GM12878 (cell line): ENCODE measurements at regions of chr11 and their contacts with region 1.

Region 1: DNA sequence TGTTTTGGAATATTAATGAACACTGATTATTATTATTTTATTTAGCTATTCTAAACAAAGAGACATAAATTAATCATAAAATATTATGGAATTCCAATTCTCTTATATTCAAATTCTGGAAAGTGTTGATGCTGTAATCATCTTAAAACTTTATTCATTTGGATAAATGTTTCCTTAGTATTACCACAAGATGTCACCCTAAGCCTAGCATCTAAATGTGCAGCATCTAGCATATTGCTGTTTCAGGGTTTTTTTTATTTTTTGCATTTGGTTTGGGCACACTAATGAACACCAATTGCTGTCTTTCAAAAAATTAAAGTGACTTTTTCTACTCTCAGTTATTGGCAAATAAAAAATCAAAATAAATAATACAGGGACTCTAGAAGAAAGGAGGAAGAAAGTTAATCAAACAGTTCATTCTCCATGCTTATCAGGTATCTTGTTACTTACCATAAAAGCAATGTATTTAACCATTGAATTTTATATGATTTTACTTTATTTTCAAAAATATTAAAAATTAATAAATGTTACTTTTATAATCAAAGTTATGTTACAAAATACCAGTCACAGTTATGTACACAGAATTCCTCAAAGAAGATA is 31.8 kb downstream of the DLG2 start:
- DNase-seq: peak; percentile 3
- ATAC-seq: peak; percentile 76
- H3K4me3 ChIP-seq: no peak overlapping the region
- H3K27ac ChIP-seq: no peak overlapping the region
- H3K4me1 ChIP-seq: no peaks in the 10 kb centered on the region
- H3K27me3 ChIP-seq: no peaks in the 10 kb centered on the region
- CTCF ChIP-seq: peak; percentile 32 to 70 (median 45); a peak in 5 of 6 replicates
- EP300 ChIP-seq: no peak
- POLR2A ChIP-seq: no peak
- RAD21 ChIP-seq: peak; percentile 92

Region 2: DNA sequence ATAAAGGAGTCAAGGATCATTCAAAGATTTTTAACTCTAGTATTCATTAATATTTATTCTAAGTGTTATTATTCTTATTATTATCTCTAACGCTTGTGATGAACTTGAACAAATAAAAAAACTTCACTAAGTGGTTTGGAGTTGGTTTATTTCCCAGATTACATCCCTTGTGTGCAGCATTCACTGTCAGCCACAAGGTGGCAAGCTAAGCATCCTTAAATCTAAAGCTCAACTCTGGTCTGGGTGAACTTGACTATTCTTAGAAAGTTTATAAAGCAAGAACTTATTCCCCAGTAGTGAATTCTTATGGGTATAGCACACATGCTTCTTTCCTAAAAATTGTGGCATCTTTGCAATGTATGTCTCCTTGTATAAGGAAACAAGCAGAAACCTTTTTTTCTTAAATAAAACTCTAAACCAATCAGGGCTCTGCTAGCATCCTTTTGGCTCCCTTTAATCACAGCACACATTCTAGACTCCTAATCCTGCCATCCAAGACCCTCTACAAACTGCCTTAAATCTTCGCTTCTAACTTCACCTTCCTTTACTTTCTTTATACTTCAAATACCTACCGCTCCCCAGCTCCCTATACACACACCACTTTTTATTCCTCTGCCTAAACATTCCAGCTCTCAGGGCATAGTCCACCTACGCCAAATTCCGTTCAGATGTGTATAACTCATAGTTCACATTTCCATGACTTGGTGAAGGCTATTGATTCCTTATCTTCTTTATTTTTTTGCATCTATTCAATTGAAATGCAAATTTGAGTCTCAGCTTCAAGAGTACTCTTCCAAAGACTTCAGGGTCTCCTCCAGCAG is 1037.1 kb before region 1 on chr11:
- CTCF ChIA-PET with region 1: interaction called, 17 read pairs
- POLR2A ChIA-PET with region 1: no interaction called
- RAD21 ChIA-PET with region 1: interaction called, 4 read pairs
- SMC1A ChIA-PET with region 1: interaction called, 14 read pairs
- in situ Hi-C with region 1: no loop called
- intact Hi-C with region 1: loop called (anchors 2 kb)
- DNase-seq: no peak
- ATAC-seq: peak; percentile 89
- H3K4me3 ChIP-seq: no peak overlapping the region
- H3K27ac ChIP-seq: no peak overlapping the region
- H3K4me1 ChIP-seq: no peaks in the 10 kb centered on the region
- H3K27me3 ChIP-seq: no peaks in the 10 kb centered on the region
- CTCF ChIP-seq: peak; percentile 73 to 82 (median 77)
- EP300 ChIP-seq: no peak
- POLR2A ChIP-seq: no peak
- RAD21 ChIP-seq: peak; percentile 85

Region 3: DNA sequence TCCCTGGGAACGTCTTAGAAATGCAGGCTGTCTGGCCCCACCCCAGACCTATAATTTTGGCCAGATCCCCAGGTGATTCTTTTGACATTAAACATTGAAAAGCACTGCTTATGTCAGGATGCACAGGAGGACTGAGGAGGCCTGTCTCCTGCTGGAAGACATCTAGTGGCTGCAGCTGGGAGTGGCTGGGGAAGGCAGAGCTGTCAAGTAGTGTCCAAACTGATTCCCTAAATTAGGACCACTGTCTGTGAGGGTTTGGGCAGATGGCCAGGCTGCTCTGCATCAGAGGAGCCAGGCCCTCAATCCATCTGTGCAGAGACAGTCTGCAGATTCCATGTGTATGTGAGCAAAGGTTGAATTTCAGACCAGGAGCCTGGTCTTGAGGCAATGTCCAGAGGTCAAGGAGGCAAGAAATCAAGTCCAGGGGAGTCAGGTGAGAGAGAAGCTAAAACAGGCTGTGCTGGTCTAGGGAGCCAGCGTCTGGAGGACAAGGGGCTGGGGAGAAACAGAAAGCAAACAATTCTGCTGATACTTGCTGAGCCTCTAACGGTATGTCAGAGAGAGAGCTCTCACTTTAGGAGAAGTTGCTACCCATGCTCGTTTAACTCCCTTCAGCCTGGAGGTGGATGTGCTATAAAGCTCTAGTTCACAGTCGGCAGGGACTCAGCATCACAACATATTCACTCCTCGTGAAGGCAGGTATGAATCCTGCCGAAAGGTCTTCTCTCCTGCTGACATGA is 230.9 kb after region 1 on chr11:
- CTCF ChIA-PET with region 1: no interaction called
- POLR2A ChIA-PET with region 1: no interaction called
- RAD21 ChIA-PET with region 1: no interaction called
- SMC1A ChIA-PET with region 1: no interaction called
- in situ Hi-C with region 1: loop called (anchors 10 kb)
- intact Hi-C with region 1: loop called (anchors 5 kb)
- DNase-seq: no peak
- ATAC-seq: peak; percentile 85
- H3K4me3 ChIP-seq: no peak overlapping the region
- H3K27ac ChIP-seq: no peak overlapping the region
- H3K4me1 ChIP-seq: no peaks in the 10 kb centered on the region
- H3K27me3 ChIP-seq: no peaks in the 10 kb centered on the region; a peak in 1 of 4 replicates
- CTCF ChIP-seq: peak; percentile 33 to 60 (median 33); a peak in 5 of 6 replicates
- EP300 ChIP-seq: no peak
- POLR2A ChIP-seq: no peak
- RAD21 ChIP-seq: peak; percentile 27; the same call in 1 of the 2 replicates

Region 4: DNA sequence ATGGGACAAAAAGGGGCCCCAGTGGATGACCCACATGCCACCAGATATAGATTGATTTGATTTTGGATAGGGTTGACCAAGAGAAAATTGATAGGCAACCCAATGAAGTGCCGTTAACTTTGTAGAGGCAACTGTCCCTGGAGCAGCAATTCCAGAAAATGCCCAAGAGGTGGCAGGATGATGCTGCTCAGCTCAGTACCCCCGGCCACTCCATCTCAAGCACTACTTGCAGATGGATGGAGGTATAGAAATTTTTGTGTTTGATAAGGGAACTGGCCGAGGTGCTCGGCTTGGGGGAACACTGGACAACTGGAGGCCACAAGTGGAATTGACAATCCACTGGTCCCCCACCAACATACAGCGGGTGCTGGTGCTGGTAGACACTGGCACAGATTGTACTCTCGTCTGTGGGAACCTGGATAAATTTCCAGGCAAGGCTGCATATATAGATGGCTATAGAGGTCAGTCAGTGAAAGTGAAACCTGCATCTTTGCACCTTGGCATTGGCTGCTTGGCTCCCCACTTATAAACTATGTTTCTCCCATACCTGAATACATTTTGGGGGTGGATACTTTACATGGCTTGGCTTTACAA is 346.1 kb after region 1 on chr11:
- CTCF ChIA-PET with region 1: no interaction called
- POLR2A ChIA-PET with region 1: no interaction called
- RAD21 ChIA-PET with region 1: no interaction called
- SMC1A ChIA-PET with region 1: no interaction called
- in situ Hi-C with region 1: no loop called
- intact Hi-C with region 1: loop called (anchors 10 kb)
- DNase-seq: no peak
- ATAC-seq: peak; percentile 77
- H3K4me3 ChIP-seq: no peak overlapping the region
- H3K27ac ChIP-seq: no peak overlapping the region
- H3K4me1 ChIP-seq: no peaks in the 10 kb centered on the region
- H3K27me3 ChIP-seq: no peaks in the 10 kb centered on the region
- CTCF ChIP-seq: peak; percentile 51 to 54 (median 52)
- EP300 ChIP-seq: no peak
- POLR2A ChIP-seq: no peak
- RAD21 ChIP-seq: peak; percentile 72

Region 5: DNA sequence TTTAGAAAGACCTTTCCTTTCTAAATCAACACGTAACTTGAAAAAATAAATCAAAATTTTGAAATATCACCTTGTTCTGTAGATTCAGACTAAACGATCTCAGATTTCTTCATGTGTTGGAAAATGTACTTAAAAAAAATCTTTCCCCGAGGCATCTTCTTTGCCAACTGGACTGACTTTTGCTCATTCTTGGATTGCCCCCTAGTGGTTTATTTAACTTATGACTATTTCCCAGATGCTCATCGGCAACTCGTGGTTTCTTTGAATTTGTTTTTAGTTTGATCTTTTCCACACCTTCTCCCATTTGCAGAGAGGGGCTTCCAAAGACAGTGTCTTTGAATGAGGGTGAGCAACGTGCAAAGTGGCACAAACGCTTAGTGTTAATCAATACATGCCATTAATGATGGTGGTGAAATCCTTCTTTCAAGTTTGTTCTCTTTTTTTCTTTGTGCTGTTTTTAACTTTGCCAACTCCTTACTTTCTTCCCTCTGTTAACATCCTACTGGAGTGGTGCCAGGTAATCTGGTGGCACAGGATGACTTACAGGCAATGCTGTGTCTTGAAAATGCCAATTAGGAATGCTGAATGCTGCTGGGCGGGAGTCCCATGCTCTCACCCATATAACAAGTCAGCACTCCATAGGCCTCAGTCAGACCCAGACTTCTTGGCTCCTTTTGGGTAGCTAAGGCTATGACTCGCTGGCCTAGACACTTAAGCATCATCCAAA is 1223.2 kb after region 1 on chr11:
- CTCF ChIA-PET with region 1: no interaction called
- POLR2A ChIA-PET with region 1: no interaction called
- RAD21 ChIA-PET with region 1: no interaction called
- SMC1A ChIA-PET with region 1: no interaction called
- in situ Hi-C with region 1: loop called (anchors 25 kb)
- intact Hi-C with region 1: no loop called
- DNase-seq: peak; percentile 7
- ATAC-seq: peak; percentile 72
- H3K4me3 ChIP-seq: no peak overlapping the region
- H3K27ac ChIP-seq: no peak overlapping the region
- H3K4me1 ChIP-seq: no peaks in the 10 kb centered on the region
- H3K27me3 ChIP-seq: no peaks in the 10 kb centered on the region; a peak in 2 of 4 replicates
- CTCF ChIP-seq: peak; percentile 50 to 73 (median 65); a peak in 5 of 6 replicates
- EP300 ChIP-seq: no peak
- POLR2A ChIP-seq: no peak
- RAD21 ChIP-seq: peak; percentile 91